GM12878 (cell line): ENCODE measurements at regions of chr5 and their contacts with region 1.

Region 1: GRCh38 chr5:116583085-116583861 is 8.7 kb upstream of the SEMA6A start:
- DNase-seq: no peak
- ATAC-seq: peak; percentile 76
- H3K4me3 ChIP-seq: no peak overlapping the region
- H3K27ac ChIP-seq: no peak overlapping the region
- H3K4me1 ChIP-seq: no peaks in the 10 kb centered on the region
- H3K27me3 ChIP-seq: no peaks in the 10 kb centered on the region
- CTCF ChIP-seq: no peak
- EP300 ChIP-seq: no peak
- POLR2A ChIP-seq: no peak
- RAD21 ChIP-seq: no peak

Region 2: DNA sequence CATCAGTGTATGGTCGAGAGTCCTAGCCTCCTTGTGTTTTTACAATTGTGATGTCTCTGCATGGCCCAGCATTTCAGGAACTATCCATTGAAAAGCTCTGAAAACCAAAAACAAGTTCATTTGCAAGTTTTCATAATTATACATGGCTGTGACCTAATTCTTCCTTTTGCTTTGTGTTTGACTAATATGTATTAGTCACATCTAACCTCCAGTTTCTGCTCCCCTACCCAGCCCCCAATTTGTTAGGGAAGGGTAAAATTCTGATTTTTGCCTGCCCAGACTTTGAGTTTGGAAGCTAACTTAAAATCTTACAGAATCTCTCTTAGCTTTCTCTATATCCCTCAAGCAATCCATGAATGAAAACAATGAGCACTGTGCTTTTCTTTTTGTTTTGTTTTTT is 119.5 kb after region 1 on chr5:
- CTCF ChIA-PET with region 1: interaction called, 3 read pairs
- POLR2A ChIA-PET with region 1: interaction called, 3 read pairs
- RAD21 ChIA-PET with region 1: interaction called, 51 read pairs
- SMC1A ChIA-PET with region 1: interaction called, 81 read pairs
- in situ Hi-C with region 1: no loop called
- intact Hi-C with region 1: no loop called
- DNase-seq: no peak
- ATAC-seq: peak; percentile 72
- H3K4me3 ChIP-seq: no peak overlapping the region
- H3K27ac ChIP-seq: peak overlapping the region; percentile 31
- H3K4me1 ChIP-seq: peaks cover 26% of the 10 kb centered on the region
- H3K27me3 ChIP-seq: no peaks in the 10 kb centered on the region
- CTCF ChIP-seq: no peak
- EP300 ChIP-seq: peak in 1 of 2 experiments; percentile 66; a peak in 1 of 4 replicates
- POLR2A ChIP-seq: no peak
- RAD21 ChIP-seq: no peak